Sigmoid colon (tissue), 7 donors: ENCODE measurements at regions of chr16 and their contacts with region 1.

Region 1: DNA sequence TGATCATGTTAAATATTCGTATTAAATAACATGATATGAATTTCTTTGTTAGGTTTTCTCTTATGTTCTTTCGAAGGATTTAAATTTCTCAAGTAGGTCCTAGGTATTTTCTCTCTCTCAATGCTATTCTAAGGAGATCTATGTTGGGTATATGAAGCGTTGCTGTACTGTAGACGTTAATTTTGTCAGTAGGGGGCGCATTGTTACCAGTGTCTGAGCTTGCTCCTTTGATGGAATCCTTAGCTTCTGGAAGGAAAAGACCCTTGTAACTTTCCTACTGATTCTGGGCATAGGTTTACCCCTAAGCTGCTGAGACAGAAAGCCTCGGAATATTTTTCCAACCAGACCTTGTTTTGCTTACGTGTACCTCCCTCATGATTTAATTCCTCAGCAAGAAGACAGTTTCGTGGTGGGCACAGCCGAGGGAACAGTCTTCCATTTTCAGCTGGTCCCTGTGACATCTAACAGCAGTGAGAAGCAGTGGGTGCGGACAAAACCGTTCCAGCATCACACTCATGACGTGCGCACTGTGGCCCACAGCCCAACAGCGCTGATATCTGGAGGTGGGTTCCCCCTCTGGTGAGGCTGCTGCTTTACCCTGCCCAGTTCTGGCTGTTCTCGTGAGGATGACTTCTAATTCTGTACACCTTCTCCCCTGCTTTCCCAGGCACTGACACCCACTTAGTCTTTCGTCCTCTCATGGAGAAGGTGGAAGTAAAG is 17.9 kb downstream of the UTP4 start:
- DNase-seq: no peak
- H3K4me3 ChIP-seq: no peak overlapping the region
- H3K27ac ChIP-seq: no peak overlapping the region
- H3K4me1 ChIP-seq: no peaks in the 10 kb centered on the region
- H3K27me3 ChIP-seq: no peaks in the 10 kb centered on the region
- CTCF ChIP-seq: peak; percentile 62 to 79 (median 69)
- EP300 ChIP-seq: no peak
- POLR2A ChIP-seq: no peak

Region 2: GRCh38 chr16:68902008-68902968 is 248.0 kb before region 1 on chr16:
- intact Hi-C with region 1: no loop called
- DNase-seq: no peak
- H3K4me3 ChIP-seq: no peak overlapping the region
- H3K27ac ChIP-seq: peak overlapping the region in 1 of 4 donors; percentile 65
- H3K4me1 ChIP-seq: peaks cover 0 to 15% (median 10%) of the 10 kb centered on the region in 4 donors
- H3K27me3 ChIP-seq: no peaks in the 10 kb centered on the region
- CTCF ChIP-seq: peak in 3 of 4 experiments; percentile 41 to 59 (median 47)
- EP300 ChIP-seq: no peak
- POLR2A ChIP-seq: no peak

Region 3: GRCh38 chr16:69186642-69187445 is 36.5 kb after region 1 on chr16 and contains the start of gene SNTB2:
- intact Hi-C with region 1: loop called (anchors 5 kb)
- DNase-seq: peak; percentile 95
- H3K4me3 ChIP-seq: peak within 1 kb of the TSS; percentile 54 to 82 (median 72)
- H3K27ac ChIP-seq: peak within 1 kb of the TSS; percentile 93 to 95 (median 94)
- H3K4me1 ChIP-seq: peaks cover 0 to 51% (median 37%) of the 10 kb centered on the region in 4 donors
- H3K27me3 ChIP-seq: no peaks in the 10 kb centered on the region
- CTCF ChIP-seq: no peak
- EP300 ChIP-seq: no peak
- POLR2A ChIP-seq: peak; percentile 73 to 76
- total RNA-seq, gene SNTB2: 23.2 to 38.2 (median 30.0) TPM

Region 4: GRCh38 chr16:69204172-69204571 is 53.9 kb after region 1 on chr16:
- intact Hi-C with region 1: no loop called
- DNase-seq: no peak
- H3K4me3 ChIP-seq: no peak overlapping the region
- H3K27ac ChIP-seq: peak overlapping the region in 2 of 4 donors; percentile 31 to 35
- H3K4me1 ChIP-seq: peaks cover 0 to 27% (median 20%) of the 10 kb centered on the region in 4 donors
- H3K27me3 ChIP-seq: no peaks in the 10 kb centered on the region
- CTCF ChIP-seq: no peak
- EP300 ChIP-seq: no peak
- POLR2A ChIP-seq: no peak

Region 5: DNA sequence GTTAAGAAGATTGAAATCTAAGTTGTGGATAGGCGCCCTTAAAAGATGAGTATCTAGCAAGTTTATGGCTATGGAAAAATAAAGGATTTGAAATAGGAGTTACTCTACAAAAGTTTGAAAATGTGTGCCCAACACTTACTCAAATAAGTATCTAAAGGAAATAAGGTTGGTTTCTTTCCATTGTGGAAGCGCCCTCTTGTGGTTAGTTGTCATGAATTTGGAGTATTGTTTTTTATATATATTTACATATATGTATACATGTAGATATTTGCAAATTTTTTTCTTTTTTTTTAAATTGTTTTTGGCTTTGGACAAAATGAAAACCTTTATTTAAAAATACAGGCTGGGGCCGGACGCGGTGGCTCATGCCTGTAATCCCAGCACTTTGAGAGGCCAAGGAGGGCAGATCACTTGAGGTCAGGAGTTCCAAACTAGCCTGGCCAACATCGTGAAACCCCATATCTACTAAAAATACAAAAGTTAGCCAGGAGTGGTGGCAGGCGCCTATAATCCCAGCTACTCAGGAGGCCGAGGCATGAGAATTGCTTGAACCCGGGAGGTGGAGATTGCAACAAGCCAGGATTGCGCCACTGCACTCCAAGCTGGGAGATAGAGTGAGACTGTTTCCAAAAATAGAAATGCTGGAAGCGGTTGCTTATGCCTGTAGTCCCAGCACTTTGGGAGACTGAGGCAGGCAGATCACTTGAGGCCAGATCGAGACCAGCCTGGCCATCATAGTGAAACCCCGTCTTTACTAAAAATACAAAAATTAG is 136.8 kb after region 1 on chr16:
- intact Hi-C with region 1: loop called (anchors 1 kb)
- DNase-seq: peak; percentile 81
- H3K4me3 ChIP-seq: no peak overlapping the region
- H3K27ac ChIP-seq: peak overlapping the region in 1 of 4 donors; percentile 15
- H3K4me1 ChIP-seq: peaks cover 0 to 8% (median 3%) of the 10 kb centered on the region in 4 donors
- H3K27me3 ChIP-seq: no peaks in the 10 kb centered on the region
- CTCF ChIP-seq: peak; percentile 46 to 64 (median 51)
- EP300 ChIP-seq: no peak
- POLR2A ChIP-seq: no peak